ENCODE measurements at regions of chr9 and their contacts with region 1.

Region 1: GRCh38 chr9:91681461-91682305 is 258.1 kb upstream of the NFIL3 start:
- DNase-seq: peak; percentile 92
- H3K4me3 Mint-ChIP-seq: peak overlapping the region; percentile 69
- H3K27ac Mint-ChIP-seq: no peak overlapping the region
- H3K4me1 Mint-ChIP-seq: peaks cover 5% of the 10 kb centered on the region
- H3K27me3 Mint-ChIP-seq: peaks cover 34% of the 10 kb centered on the region

Region 2: GRCh38 chr9:91433180-91433579 is 248.5 kb before region 1 on chr9:
- intact Hi-C with region 1: loop called (anchors 5 kb)
- DNase-seq: peak; percentile 75
- H3K4me3 Mint-ChIP-seq: no peak overlapping the region
- H3K27ac Mint-ChIP-seq: no peak overlapping the region
- H3K4me1 Mint-ChIP-seq: peaks cover 20% of the 10 kb centered on the region
- H3K27me3 Mint-ChIP-seq: peaks cover 18% of the 10 kb centered on the region

Region 3: DNA sequence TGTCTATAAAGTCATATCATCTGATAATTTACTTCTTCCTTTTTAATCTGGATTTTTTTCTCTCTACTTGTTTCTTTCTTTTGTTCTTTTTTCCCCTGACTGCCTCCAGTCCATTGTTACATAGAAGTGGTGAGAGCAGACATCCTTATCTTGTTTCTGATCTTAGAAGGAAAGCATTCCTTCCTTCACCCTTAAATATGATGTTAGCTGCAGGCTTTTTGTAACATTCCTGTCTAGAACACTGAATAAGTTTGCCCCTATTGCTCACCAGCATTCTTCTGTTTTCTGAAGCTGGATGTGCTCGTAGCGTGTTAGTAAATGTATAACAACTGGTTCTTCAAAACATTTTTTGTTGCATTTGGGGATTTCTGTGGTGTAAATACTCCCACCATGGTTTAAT is 121.4 kb before region 1 on chr9:
- intact Hi-C with region 1: no loop called
- DNase-seq: no peak
- H3K4me3 Mint-ChIP-seq: no peak overlapping the region
- H3K27ac Mint-ChIP-seq: no peak overlapping the region
- H3K4me1 Mint-ChIP-seq: no peaks in the 10 kb centered on the region
- H3K27me3 Mint-ChIP-seq: peaks cover 40% of the 10 kb centered on the region

Region 4: GRCh38 chr9:91693226-91693625 is 11.5 kb after region 1 on chr9:
- intact Hi-C with region 1: no loop called
- DNase-seq: no peak
- H3K4me3 Mint-ChIP-seq: no peak overlapping the region
- H3K27ac Mint-ChIP-seq: no peak overlapping the region
- H3K4me1 Mint-ChIP-seq: peaks cover 3% of the 10 kb centered on the region
- H3K27me3 Mint-ChIP-seq: peaks cover 11% of the 10 kb centered on the region

Measured in activated CD4-positive, alpha-beta T cell treated with anti-CD3 and anti-CD28 coated beads, Interleukin-2, amount 10 ng/mL, durations not matched to agents 24 days and 14 days (primary cell).